ENCODE measurements at regions of chr10 and their contacts with region 1.

Region 1: DNA sequence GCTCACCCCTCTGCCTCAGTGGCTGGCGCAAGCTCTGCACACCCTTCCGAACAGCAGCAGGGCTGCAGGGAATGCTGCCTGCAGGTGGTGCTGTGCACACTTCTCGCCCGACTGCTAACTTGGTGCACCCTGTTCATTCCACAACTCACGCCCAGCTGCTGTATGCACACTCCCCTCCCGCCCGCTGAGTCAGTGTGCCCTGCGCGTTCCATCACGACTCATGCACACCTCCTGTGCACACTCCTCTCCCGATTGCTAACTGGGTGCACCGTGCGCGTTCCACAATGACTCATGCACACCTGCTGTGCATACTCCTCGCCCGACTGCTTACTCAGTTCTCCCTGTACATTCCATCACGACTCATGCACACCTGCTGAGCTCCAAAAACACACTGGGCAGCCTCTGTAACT is 21.5 kb downstream of the ADARB2 start:
- DNase-seq: peak; percentile 36 to 64
- H3K4me3 ChIP-seq: no peak overlapping the region
- H3K27ac ChIP-seq: no peak overlapping the region
- H3K4me1 ChIP-seq: peaks cover 0 to 16% (median 6%) of the 10 kb centered on the region in 4 experiments; a peak in 6 of 7 replicates
- H3K27me3 ChIP-seq: no peaks in the 10 kb centered on the region
- CTCF ChIP-seq: peak; percentile 61 to 97 (median 92)
- EP300 ChIP-seq: no peak
- POLR2A ChIP-seq: no peak
- RAD21 ChIP-seq: peak; percentile 52 to 68

Region 2: GRCh38 chr10:1729751-1730150 is 13.9 kb after region 1 on chr10:
- CTCF ChIA-PET with region 1: interaction called, 14 read pairs
- POLR2A ChIA-PET with region 1: no interaction called
- DNase-seq: no peak
- H3K4me3 ChIP-seq: no peak overlapping the region
- H3K27ac ChIP-seq: no peak overlapping the region
- H3K4me1 ChIP-seq: peaks cover 0 to 2% (median 0%) of the 10 kb centered on the region in 4 experiments; a peak in 3 of 7 replicates
- H3K27me3 ChIP-seq: no peaks in the 10 kb centered on the region; a peak in 2 of 7 replicates
- CTCF ChIP-seq: no peak
- EP300 ChIP-seq: no peak
- POLR2A ChIP-seq: no peak
- RAD21 ChIP-seq: no peak

Region 3: GRCh38 chr10:1737222-1738061 is 21.6 kb after region 1 on chr10 and contains the start of gene ADARB2:
- CTCF ChIA-PET with region 1: interaction called, 14 read pairs
- POLR2A ChIA-PET with region 1: no interaction called
- DNase-seq: peak; percentile 70 to 85
- H3K4me3 ChIP-seq: peak within 1 kb of the TSS; percentile 41 to 68 (median 54)
- H3K27ac ChIP-seq: no peak within 1 kb of the TSS
- H3K4me1 ChIP-seq: peaks cover 0 to 11% (median 4%) of the 10 kb centered on the region in 4 experiments; a peak in 5 of 7 replicates
- H3K27me3 ChIP-seq: peaks cover 0 to 28% (median 20%) of the 10 kb centered on the region in 4 experiments; a peak in 6 of 7 replicates
- CTCF ChIP-seq: no peak
- EP300 ChIP-seq: no peak
- POLR2A ChIP-seq: no peak
- RAD21 ChIP-seq: peak in 1 of 2 experiments; percentile 4; a peak in 1 of 4 replicates
- total RNA-seq, gene ADARB2: 2.7 and 2.8 TPM in 2 replicates